CD8-positive, alpha-beta T cell (primary cell): ENCODE measurements at regions of chr16 and their contacts with region 1.

Region 1: DNA sequence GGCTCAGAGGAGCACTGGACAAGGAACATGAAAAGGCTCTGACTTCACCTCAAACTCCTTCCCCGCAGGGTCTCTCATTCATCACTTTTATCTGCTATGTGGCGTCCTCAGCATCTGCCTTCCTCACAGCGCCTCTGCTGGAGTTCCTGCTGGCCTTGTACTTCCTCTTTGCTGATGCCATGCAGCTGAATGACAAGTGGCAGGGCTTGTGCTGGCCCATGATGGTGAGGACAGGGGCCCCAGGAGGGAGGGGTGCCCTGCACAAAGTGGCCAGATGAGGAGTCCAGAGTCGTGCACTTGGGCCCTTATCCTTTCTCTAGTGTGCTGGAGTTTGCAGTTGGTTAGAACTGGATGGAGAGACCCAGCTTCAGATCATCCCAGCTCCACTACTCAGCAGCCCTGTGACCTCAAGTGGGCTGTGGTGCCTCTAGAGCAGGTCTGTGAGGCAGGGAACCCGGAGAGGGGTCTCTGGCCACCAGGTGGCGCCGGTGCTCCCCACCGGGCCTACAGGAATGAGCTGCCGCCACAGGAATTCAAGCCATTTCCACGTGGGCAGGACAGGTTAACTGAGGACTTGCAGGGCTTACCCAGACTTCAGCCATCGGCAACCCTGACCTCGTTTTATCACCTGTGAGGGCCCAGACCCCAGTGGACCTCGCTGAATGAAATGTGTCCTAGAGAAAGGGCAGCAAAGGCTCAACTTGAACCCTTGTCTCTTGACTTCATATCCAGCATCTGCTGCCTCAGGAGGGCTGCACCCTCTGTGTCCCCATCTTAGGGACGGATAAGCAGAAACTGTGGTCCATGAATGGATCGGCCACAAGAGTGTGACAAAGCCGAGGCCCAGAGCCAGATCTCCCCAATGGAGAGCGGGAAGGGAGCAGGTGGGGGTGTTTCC is 4.0 kb downstream of the CMTM3 start:
- DNase-seq: peak; percentile 66 to 88 (median 82)
- ATAC-seq: peak; percentile 29
- H3K4me3 ChIP-seq: no peak overlapping the region
- H3K4me3 Mint-ChIP-seq: no peak overlapping the region
- H3K27ac ChIP-seq: peak overlapping the region in 1 of 2 experiments; percentile 21
- H3K27ac Mint-ChIP-seq: peak overlapping the region; percentile 60
- H3K4me1 ChIP-seq: peaks cover 24% of the 10 kb centered on the region
- H3K4me1 Mint-ChIP-seq: peaks cover 35% of the 10 kb centered on the region
- H3K27me3 ChIP-seq: no peaks in the 10 kb centered on the region
- H3K27me3 Mint-ChIP-seq: no peaks in the 10 kb centered on the region
- CTCF ChIP-seq: peak; percentile 85

Region 2: GRCh38 chr16:66483689-66484481 is 124.6 kb before region 1 on chr16:
- CTCF ChIA-PET with region 1: interaction called, 5 read pairs
- POLR2A ChIA-PET with region 1: interaction called, 3 read pairs
- intact Hi-C with region 1: loop called in 1 of 2 experiments (anchors 5 kb)
- DNase-seq: peak; percentile 50 to 82 (median 76)
- ATAC-seq: peak; percentile 83
- H3K4me3 ChIP-seq: no peak overlapping the region
- H3K4me3 Mint-ChIP-seq: no peak overlapping the region
- H3K27ac ChIP-seq: no peak overlapping the region
- H3K27ac Mint-ChIP-seq: no peak overlapping the region
- H3K4me1 ChIP-seq: peaks cover 5% of the 10 kb centered on the region
- H3K4me1 Mint-ChIP-seq: peaks cover 16% of the 10 kb centered on the region
- H3K27me3 ChIP-seq: no peaks in the 10 kb centered on the region
- H3K27me3 Mint-ChIP-seq: no peaks in the 10 kb centered on the region
- CTCF ChIP-seq: peak; percentile 92

Region 3: DNA sequence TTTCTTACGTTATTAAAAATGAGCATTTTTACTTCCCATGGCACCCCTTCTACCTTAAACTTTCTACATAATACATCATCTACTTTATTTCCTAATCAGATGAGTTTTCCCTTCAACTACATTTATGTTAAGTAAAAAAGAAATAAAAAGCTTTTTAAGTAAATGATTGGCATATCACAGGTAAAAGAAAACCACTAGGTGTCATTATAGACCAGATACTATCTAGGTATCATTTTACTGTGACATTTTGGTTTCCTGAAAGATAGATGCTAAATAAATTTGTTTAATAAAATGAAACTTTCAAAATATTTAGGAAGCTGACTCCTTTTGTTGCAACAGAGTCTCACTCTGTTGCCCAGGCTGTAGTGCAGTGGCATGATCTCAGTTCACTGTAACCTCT is 46.1 kb before region 1 on chr16:
- CTCF ChIA-PET with region 1: interaction called, 25 read pairs
- POLR2A ChIA-PET with region 1: interaction called, 9 read pairs
- intact Hi-C with region 1: loop called (anchors 1 kb)
- DNase-seq: peak in 2 of 9 experiments; percentile 34 to 56
- ATAC-seq: peak; percentile 64
- H3K4me3 ChIP-seq: no peak overlapping the region
- H3K4me3 Mint-ChIP-seq: no peak overlapping the region
- H3K27ac ChIP-seq: peak overlapping the region in 1 of 2 experiments; percentile 58
- H3K27ac Mint-ChIP-seq: peak overlapping the region; percentile 49
- H3K4me1 ChIP-seq: peaks cover 9% of the 10 kb centered on the region
- H3K4me1 Mint-ChIP-seq: peaks cover 60% of the 10 kb centered on the region
- H3K27me3 ChIP-seq: no peaks in the 10 kb centered on the region
- H3K27me3 Mint-ChIP-seq: no peaks in the 10 kb centered on the region
- CTCF ChIP-seq: peak; percentile 61

Region 4: DNA sequence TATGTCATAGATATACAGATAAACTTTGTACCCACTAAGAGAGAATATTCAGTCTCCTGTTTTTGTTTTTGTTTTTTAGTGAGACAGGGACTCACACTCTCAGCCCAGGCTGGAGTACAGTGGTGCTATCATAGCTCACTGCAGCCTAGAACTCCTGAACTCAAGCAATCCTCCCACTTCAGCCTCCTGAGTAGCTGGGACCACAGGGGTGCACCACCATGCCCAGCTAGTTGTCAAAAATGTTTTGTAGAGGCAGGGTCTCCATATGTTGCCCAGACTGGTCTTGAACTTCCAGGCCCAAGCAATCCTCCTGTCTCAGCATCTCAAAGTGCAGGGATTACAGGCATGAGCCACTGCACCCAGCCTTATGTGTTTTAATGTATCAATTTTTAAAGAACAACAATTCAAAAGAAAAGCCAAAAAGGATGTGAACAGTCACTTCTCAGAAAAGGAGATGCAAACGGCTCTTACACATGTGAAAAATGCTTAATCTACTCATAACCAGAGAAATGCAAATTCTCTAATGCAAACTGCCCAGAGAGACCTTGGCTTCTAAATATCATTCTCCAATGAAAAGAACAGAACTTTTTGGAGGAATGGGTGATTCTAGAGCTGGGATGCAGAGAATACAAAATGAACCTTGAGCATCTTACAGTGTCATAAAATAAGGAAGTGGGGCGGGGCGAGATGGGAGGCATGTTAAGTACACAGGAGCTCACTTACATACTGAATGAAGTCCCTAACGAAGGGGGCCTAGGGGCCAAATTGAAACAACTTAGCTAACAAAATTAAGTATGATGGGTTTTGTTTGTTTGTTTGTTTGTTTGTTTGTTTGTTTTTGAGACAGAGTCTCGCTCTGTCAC is 11.3 kb before region 1 on chr16:
- CTCF ChIA-PET with region 1: interaction called, 4 read pairs
- POLR2A ChIA-PET with region 1: interaction called, 12 read pairs
- intact Hi-C with region 1: no loop called
- DNase-seq: no peak
- ATAC-seq: no peak
- H3K4me3 ChIP-seq: no peak overlapping the region
- H3K4me3 Mint-ChIP-seq: no peak overlapping the region
- H3K27ac ChIP-seq: no peak overlapping the region
- H3K27ac Mint-ChIP-seq: peak overlapping the region; percentile 4
- H3K4me1 ChIP-seq: peaks cover 24% of the 10 kb centered on the region
- H3K4me1 Mint-ChIP-seq: peaks cover 31% of the 10 kb centered on the region
- H3K27me3 ChIP-seq: no peaks in the 10 kb centered on the region
- H3K27me3 Mint-ChIP-seq: no peaks in the 10 kb centered on the region
- CTCF ChIP-seq: no peak

Region 5: GRCh38 chr16:66668777-66669444 is 60.4 kb after region 1 on chr16:
- CTCF ChIA-PET with region 1: no interaction called
- POLR2A ChIA-PET with region 1: no interaction called
- intact Hi-C with region 1: no loop called
- DNase-seq: no peak
- ATAC-seq: no peak
- H3K4me3 ChIP-seq: no peak overlapping the region
- H3K4me3 Mint-ChIP-seq: no peak overlapping the region
- H3K27ac ChIP-seq: no peak overlapping the region
- H3K27ac Mint-ChIP-seq: no peak overlapping the region
- H3K4me1 ChIP-seq: no peaks in the 10 kb centered on the region
- H3K4me1 Mint-ChIP-seq: no peaks in the 10 kb centered on the region
- H3K27me3 ChIP-seq: no peaks in the 10 kb centered on the region
- H3K27me3 Mint-ChIP-seq: no peaks in the 10 kb centered on the region
- CTCF ChIP-seq: no peak

Region 6: DNA sequence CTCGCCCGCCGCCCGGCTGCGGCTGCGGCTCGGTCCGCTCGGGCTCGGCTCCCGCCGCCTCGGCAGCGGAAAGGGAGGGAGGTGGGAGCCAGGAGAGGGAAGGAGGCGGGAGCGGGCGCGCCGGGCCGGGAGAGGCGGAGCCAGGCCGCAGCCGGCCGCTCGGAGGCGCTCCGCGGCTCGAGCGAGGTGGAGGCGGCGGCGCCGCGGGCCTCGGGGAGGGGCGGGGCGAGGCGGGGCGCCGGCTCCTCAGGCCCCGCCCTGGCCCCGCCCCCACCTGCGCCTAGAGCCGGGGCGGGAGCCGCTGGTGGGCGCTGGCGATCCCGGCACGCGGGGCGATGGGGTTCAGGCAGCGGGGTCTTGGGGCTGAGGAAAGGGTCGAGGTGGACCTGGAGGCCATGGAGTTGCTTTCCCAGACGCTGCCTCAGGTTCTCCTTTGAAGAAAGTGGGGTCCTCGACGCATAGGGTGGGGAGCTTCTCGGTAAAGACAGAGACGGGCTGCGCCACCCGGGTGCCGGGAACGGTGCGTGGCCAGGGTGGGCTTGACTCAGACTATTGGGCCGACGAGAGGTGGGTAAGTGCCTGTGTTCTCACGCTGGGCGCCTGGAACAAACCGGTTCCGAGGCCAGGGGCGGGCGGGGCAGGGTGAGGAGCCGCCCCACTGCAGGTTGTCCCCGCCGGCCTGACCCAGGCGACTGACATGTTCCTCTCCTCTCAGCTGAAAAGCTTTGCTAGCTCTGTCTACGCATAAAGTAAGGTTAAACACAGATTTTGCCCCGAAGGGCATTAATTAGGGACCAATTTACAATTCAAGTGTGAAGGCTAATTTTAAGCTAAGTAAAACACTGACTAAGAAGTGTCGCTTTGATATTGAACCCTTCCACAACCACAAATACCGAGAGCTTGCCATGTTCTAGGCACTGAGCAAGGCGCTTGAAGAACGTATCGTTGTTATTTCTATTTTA is 88.5 kb after region 1 on chr16 and contains the start of gene CMTM4:
- CTCF ChIA-PET with region 1: interaction called, 4 read pairs
- POLR2A ChIA-PET with region 1: interaction called, 3 read pairs
- intact Hi-C with region 1: loop called (anchors 2 kb)
- DNase-seq: peak; percentile 48 to 90 (median 75)
- ATAC-seq: peak; percentile 96
- H3K4me3 ChIP-seq: peak within 1 kb of the TSS; percentile 69 to 83
- H3K4me3 Mint-ChIP-seq: peak within 1 kb of the TSS; percentile 84
- H3K27ac ChIP-seq: no peak within 1 kb of the TSS
- H3K27ac Mint-ChIP-seq: peak within 1 kb of the TSS; percentile 41
- H3K4me1 ChIP-seq: peaks cover 19% of the 10 kb centered on the region
- H3K4me1 Mint-ChIP-seq: peaks cover 17% of the 10 kb centered on the region
- H3K27me3 ChIP-seq: no peaks in the 10 kb centered on the region
- H3K27me3 Mint-ChIP-seq: peaks cover 5% of the 10 kb centered on the region
- CTCF ChIP-seq: no peak
- total RNA-seq, gene CMTM4: 0.84 to 0.89 TPM